ENCODE measurements at regions of chr16 and their contacts with region 1.

Region 1: GRCh38 chr16:68264128-68265077 is at the start of gene SLC7A6:
- DNase-seq: peak; percentile 87
- ATAC-seq: peak; percentile 83 to 84
- total RNA-seq, gene SLC7A6: 33.0 to 51.6 TPM

Region 2: GRCh38 chr16:68310761-68311511 is 46.5 kb after region 1 on chr16 and contains the starts of genes PRMT7 and SLC7A6OS:
- intact Hi-C with region 1: loop called (anchors 5 kb)
- DNase-seq: peak; percentile 93
- ATAC-seq: peak; percentile 100
- total RNA-seq, gene PRMT7: 24.3 to 24.9 TPM
- total RNA-seq, gene SLC7A6OS: 10.2 to 10.7 TPM

Region 3: GRCh38 chr16:68351962-68352431 is 87.6 kb after region 1 on chr16:
- intact Hi-C with region 1: no loop called
- DNase-seq: no peak
- ATAC-seq: no peak

Region 4: DNA sequence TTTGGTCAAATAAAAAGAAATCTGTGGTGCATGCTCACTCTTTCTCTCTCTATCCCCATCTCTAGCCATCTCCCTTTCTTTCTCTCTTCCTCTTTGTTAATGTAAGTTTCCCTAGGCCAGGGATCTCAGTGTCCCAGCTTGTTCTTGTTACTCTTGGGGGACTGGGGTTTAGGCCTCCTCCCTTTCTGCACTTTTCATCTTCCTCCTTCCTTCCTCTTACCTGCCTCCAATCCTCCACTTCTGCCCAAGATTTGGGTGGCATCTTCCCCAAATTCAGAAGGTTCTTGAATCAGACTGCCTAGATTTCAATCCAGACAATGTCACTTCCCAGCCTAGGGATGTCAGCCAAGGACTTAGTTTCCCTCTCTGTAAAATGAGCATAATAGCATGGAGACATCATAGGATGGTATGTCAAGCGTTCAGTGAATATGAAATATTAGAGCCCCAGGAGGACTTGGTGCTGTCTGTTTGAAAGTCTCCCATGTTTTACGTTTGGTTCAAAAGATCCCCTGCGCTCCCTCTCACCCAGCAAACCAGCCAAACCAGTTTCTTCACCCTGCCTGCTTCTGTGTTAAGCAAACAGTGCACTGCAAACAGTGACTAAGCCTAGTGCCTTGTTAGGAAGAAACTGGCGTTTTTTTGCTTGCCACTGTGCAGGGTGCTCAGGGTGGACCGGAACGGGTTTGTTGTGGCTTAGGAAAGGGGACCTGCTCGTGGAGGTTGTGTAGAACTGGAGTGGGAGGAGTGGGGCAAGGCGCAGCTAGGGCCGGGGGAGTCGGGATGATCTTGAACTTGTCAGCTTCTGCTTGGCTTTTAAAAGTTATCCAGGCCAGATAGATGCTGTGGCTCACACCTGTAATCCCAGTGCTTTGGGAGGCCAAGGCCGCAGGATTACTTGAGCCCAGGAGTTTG is 480.2 kb after region 1 on chr16:
- intact Hi-C with region 1: no loop called
- DNase-seq: no peak
- ATAC-seq: no peak

Measured in left cardiac atrium (tissue), 4 donors.